Left ventricle myocardium inferior (tissue), 1 donor: ENCODE measurements at regions of chr15 and their contacts with region 1.

Region 1: DNA sequence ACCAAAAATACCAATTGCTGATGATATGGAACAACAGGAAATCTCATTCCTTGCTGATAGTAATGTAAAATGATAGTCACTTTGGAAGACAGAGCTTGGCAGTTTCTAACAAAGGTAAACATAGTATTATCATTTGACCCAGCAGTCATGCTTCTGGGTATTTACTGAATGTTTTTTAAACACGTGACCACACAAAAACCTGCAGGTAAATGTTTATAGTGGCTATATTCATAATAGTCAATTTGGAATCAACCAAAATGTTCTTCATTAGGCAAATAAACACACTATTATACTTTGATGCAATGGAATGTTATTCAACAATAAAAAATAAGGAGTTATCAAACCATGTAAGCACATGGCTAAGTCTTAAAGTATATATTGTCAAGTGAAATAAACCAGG is 24.1 kb upstream of the GOLGA8A start:
- DNase-seq: no peak
- H3K4me3 ChIP-seq: no peak overlapping the region
- H3K27ac ChIP-seq: no peak overlapping the region
- H3K4me1 ChIP-seq: no peaks in the 10 kb centered on the region
- H3K27me3 ChIP-seq: no peaks in the 10 kb centered on the region
- CTCF ChIP-seq: no peak

Region 2: GRCh38 chr15:34217587-34218225 is 244.0 kb before region 1 on chr15:
- intact Hi-C with region 1: no loop called
- DNase-seq: no peak
- H3K4me3 ChIP-seq: no peak overlapping the region
- H3K27ac ChIP-seq: no peak overlapping the region
- H3K4me1 ChIP-seq: no peaks in the 10 kb centered on the region
- H3K27me3 ChIP-seq: no peaks in the 10 kb centered on the region
- CTCF ChIP-seq: no peak

Region 3: DNA sequence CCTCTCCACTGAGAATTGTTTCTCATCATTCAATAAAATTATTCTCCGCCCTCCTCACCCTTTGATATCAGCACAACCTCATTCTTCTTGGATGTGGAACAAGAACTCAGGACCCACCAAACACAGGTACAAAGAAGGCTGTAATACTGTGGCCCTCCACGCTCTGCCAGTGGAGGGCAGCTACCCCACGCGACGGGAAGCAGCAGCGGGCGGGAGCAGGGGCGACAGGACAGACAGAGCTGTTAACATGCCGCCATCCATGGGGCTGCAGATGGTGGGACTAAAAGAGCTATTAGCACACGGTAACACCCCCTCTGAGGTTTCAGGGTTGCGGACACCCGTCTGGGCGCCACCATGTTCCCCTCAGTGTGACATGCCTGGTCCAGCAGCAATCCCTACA is 199.4 kb before region 1 on chr15:
- intact Hi-C with region 1: no loop called
- DNase-seq: no peak
- H3K4me3 ChIP-seq: no peak overlapping the region
- H3K27ac ChIP-seq: no peak overlapping the region
- H3K4me1 ChIP-seq: peaks cover 17% of the 10 kb centered on the region
- H3K27me3 ChIP-seq: no peaks in the 10 kb centered on the region
- CTCF ChIP-seq: no peak

Region 4: GRCh38 chr15:34603134-34603533 is 141.4 kb after region 1 on chr15:
- intact Hi-C with region 1: no loop called
- DNase-seq: no peak
- H3K4me3 ChIP-seq: no peak overlapping the region
- H3K27ac ChIP-seq: no peak overlapping the region
- H3K4me1 ChIP-seq: no peaks in the 10 kb centered on the region
- H3K27me3 ChIP-seq: peaks cover 4% of the 10 kb centered on the region
- CTCF ChIP-seq: no peak

Region 5: GRCh38 chr15:34616613-34617012 is 154.9 kb after region 1 on chr15:
- intact Hi-C with region 1: no loop called
- DNase-seq: no peak
- H3K4me3 ChIP-seq: no peak overlapping the region
- H3K27ac ChIP-seq: no peak overlapping the region
- H3K4me1 ChIP-seq: peaks cover 3% of the 10 kb centered on the region
- H3K27me3 ChIP-seq: no peaks in the 10 kb centered on the region
- CTCF ChIP-seq: peak; percentile 31

Region 6: GRCh38 chr15:34679291-34679690 is 217.6 kb after region 1 on chr15:
- intact Hi-C with region 1: loop called (anchors 10 kb)
- DNase-seq: no peak
- H3K4me3 ChIP-seq: no peak overlapping the region
- H3K27ac ChIP-seq: no peak overlapping the region
- H3K4me1 ChIP-seq: no peaks in the 10 kb centered on the region
- H3K27me3 ChIP-seq: peaks cover 41% of the 10 kb centered on the region
- CTCF ChIP-seq: no peak